Calu3 (cell line): ENCODE measurements at regions of chrX and their contacts with region 1.

Region 1: DNA sequence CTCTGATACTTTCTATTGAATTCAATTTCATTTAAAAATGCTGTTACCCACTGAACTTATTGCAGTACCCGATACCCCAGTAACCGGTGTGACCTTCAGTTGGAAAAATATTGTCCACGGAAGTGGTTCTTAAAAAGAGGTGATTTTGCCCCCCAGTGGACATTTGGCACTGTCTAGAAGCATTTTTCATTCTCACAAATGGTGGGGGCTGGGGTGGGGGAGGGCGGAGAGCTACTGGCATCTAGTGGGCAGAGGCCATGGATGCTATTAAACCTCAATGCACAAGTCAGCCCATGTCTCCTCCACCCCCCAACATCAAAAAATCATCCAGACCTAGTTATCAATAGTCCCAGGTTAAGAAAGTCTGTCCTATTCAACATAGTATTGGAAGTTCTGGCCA is 19.6 kb upstream of the CHM start:
- DNase-seq: peak; percentile 1
- H3K4me3 Mint-ChIP-seq: no peak overlapping the region
- H3K27ac Mint-ChIP-seq: no peak overlapping the region
- H3K4me1 Mint-ChIP-seq: no peaks in the 10 kb centered on the region
- H3K27me3 Mint-ChIP-seq: no peaks in the 10 kb centered on the region
- CTCF ChIP-seq: no peak

Region 2: DNA sequence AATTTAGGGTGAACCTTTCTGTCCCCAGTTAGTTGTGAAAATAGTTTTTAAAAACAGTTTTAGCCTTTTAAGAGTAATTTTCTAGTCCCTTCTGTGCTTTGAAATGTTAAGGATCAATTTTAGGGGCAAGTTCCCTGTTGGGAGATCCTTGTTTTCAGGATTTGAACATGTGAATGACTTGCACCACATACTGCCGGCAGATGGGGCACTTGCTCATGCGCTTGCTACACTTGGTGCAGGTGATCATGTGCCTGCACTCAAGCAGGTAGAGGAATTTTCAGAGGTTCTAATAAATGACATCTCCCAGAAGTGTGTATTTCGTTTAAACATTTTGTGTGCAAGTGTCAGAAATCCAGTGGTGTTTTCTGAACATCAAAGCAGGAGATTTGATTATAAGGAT is 215.6 kb before region 1 on chrX:
- CTCF ChIA-PET with region 1: no interaction called
- intact Hi-C with region 1: loop called (anchors 1 kb)
- DNase-seq: peak; percentile 52
- H3K4me3 Mint-ChIP-seq: no peak overlapping the region
- H3K27ac Mint-ChIP-seq: no peak overlapping the region
- H3K4me1 Mint-ChIP-seq: no peaks in the 10 kb centered on the region
- H3K27me3 Mint-ChIP-seq: no peaks in the 10 kb centered on the region
- CTCF ChIP-seq: peak; percentile 31